Psoas muscle (tissue), 8 donors: ENCODE measurements at regions of chr3 and their contacts with region 1.

Region 1: GRCh38 chr3:63993653-63994079 is 29.6 kb downstream of the PSMD6 start:
- DNase-seq: peak; percentile 55 to 79
- ATAC-seq: peak; percentile 90 to 96 (median 92)
- H3K4me3 ChIP-seq: no peak overlapping the region
- H3K27ac ChIP-seq: no peak overlapping the region
- H3K4me1 ChIP-seq: peaks cover 1% of the 10 kb centered on the region
- H3K27me3 ChIP-seq: no peaks in the 10 kb centered on the region
- CTCF ChIP-seq: peak; percentile 94

Region 2: GRCh38 chr3:63264716-63265115 is 729.0 kb before region 1 on chr3:
- intact Hi-C with region 1: no loop called
- DNase-seq: no peak
- ATAC-seq: no peak
- H3K4me3 ChIP-seq: no peak overlapping the region
- H3K27ac ChIP-seq: no peak overlapping the region
- H3K4me1 ChIP-seq: no peaks in the 10 kb centered on the region
- H3K27me3 ChIP-seq: no peaks in the 10 kb centered on the region
- CTCF ChIP-seq: no peak

Region 3: DNA sequence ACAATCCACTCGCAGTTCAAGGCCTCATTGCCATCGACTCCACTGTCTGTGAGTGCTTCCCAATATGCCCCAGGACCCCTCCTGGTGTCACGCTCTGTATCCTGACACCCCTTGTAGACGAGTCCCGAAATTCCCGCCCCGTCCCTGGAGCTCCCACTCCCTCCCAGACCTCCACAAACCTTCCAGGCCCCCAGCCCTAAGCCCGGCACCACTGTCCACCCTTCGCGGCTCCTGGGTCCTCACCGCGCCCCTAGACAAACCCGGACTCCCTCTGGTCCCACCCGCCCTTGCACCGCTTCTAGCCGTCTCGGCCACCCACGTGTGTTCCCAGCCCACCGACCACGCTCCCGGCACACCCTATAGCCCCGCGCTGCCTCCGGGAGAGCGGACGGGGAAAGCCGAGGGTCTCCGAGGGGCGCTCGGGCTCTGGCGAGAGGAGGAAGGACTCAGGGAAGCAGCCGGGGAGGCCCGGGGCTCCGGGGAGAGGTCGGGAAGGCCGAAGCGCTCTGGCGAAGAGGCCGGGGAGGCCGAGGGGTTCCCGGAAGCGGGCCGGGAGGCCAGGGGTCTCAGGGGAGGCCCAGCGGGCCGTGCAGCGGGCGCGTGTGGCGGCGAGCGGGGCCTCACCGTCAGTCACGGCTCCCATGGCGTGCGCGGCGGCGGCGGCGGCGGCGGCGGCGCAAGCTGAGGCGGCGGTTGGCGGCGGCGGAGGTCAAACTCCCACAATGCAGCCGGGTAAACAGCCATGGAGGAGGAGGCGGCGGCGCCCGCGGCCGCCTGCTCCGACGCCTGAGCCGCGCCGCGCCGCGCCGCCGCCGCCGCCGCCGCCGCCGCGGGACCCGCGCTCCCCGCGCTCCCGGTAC is 130.3 kb before region 1 on chr3 and contains the starts of genes ATXN7 and THOC7:
- intact Hi-C with region 1: loop called in 1 of 2 experiments (anchors 10 kb)
- DNase-seq: peak; percentile 78 to 87
- ATAC-seq: peak; percentile 85 to 92 (median 91)
- H3K4me3 ChIP-seq: peak within 1 kb of the TSS; percentile 99
- H3K27ac ChIP-seq: peak within 1 kb of the TSS; percentile 98
- H3K4me1 ChIP-seq: peaks cover 19% of the 10 kb centered on the region
- H3K27me3 ChIP-seq: no peaks in the 10 kb centered on the region
- CTCF ChIP-seq: no peak
- total RNA-seq, gene ATXN7: 16.2 to 27.2 (median 21.6) TPM
- total RNA-seq, gene THOC7: 61.0 to 90.8 (median 75.1) TPM

Region 4: DNA sequence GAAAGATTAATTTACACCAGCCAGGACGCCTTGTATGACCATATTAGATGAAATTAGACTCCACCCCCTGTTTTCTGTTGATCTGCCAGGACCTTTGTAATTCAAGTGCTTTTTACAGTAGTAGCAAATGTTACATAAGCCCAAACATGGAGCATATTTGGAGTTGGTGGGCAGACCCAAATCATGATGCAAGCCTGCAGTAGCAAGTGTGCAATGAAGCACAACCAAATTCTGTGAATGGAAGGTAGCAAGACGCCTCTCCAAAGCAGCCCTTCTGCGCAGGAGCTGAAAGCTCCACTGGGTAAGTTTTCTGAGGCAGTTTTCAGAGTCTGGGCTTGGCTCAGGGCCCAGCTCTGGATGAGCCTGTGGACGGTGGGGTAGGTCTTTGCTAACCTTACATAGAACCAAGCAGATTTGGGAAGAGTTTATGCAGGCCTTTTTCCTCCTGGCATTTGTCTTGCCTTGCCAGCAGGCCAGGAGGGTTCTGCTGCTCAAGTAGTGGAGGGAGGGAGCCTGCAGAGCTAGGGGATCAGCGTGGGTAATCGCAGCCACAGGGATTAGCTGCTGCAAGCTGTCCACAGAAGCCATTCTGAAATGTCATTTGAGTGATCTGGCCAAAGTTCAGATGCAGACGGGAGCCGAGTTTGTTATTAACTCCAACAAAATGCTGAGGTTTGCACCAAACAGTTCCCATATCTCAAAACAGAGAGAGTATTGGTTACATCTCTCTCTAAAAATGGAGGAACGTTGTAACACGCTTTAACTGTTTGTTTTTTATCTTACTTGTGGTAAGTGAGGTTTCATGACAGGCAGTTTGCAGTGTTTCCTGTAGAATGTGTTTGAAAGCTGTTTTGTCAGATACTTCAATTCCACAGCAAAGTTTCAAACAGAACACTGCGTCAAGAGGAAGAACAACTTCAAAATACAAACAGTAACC is 25.7 kb before region 1 on chr3:
- intact Hi-C with region 1: loop called in 1 of 2 experiments (anchors 2 kb)
- DNase-seq: peak; percentile 32 to 61
- ATAC-seq: peak; percentile 45 to 81 (median 72)
- H3K4me3 ChIP-seq: peak overlapping the region; percentile 42
- H3K27ac ChIP-seq: peak overlapping the region; percentile 73
- H3K4me1 ChIP-seq: peaks cover 74% of the 10 kb centered on the region
- H3K27me3 ChIP-seq: no peaks in the 10 kb centered on the region
- CTCF ChIP-seq: no peak